ENCODE measurements at regions of chr1 and their contacts with region 1.

Region 1: DNA sequence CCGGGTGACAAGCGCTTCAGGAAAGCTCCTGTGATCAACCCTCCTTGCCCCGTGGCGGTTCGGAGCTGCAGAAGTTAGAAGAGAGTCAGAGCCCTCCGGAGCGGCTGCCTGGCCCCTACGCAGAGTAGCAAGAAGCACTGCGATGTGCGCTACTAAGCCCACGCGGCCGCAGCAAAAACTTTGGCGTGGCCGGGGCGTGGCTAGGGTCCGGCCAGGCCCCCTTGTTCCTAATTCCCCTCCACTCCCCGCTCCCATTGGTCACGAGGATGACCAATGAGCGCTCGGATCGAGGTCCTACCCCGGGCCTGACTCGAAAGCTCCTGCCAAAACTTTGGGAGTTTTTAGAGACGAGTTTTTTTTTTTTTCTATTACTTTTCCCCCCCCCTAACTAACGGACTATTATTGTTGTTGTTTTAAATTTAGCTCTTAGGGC is at the start of gene HLX:
- DNase-seq: peak; percentile 96
- ATAC-seq: peak; percentile 89
- H3K4me3 ChIP-seq: peak within 1 kb of the TSS; percentile 85
- H3K27ac ChIP-seq: peak within 1 kb of the TSS; percentile 20
- H3K4me1 ChIP-seq: peaks cover 16% of the 10 kb centered on the region; the same call in 1 of the 2 replicates
- H3K27me3 ChIP-seq: no peaks in the 10 kb centered on the region
- CTCF ChIP-seq: no peak
- total RNA-seq, gene HLX: 4.0 and 8.1 TPM in 2 replicates

Region 2: DNA sequence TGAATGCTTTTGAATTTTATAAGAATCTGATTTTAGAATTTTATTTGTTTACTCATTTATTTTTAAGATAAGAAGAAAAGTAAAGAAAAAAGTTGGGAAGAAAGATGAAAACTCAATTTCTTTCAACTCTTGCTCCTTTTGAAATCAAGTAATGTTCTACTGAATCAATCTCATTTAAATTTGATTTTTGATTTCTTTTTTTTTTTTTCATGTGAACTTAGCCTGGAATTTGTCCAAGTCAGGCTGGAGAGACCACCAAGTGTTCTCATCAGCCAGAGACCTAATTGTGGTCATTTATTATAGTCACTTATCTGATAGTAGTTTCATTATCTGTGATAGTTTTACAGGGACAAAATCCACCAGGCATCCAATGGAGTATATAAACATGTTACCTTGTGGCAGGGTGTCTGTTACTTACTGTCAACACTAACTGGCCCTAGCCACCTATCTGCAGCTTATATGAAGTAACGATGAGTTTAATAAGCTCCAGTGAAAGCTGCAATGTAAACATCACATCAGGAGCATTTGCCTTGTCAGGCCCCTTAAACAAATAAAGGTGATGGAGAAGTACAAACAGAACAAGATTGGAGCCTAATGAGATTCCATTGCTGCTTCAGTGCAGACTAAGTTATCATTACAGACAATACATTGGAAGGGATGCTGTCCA is 39.3 kb after region 1 on chr1:
- CTCF ChIA-PET with region 1: no interaction called
- POLR2A ChIA-PET with region 1: no interaction called
- intact Hi-C with region 1: loop called (anchors 2 kb)
- DNase-seq: peak; percentile 58
- ATAC-seq: peak; percentile 93
- H3K4me3 ChIP-seq: no peak overlapping the region
- H3K27ac ChIP-seq: no peak overlapping the region
- H3K4me1 ChIP-seq: peaks cover 11% of the 10 kb centered on the region
- H3K27me3 ChIP-seq: no peaks in the 10 kb centered on the region
- CTCF ChIP-seq: no peak

Region 3: GRCh38 chr1:220990427-220991339 is 111.6 kb after region 1 on chr1:
- CTCF ChIA-PET with region 1: interaction called, 5 read pairs
- POLR2A ChIA-PET with region 1: no interaction called
- intact Hi-C with region 1: loop called (anchors 2 kb)
- DNase-seq: peak; percentile 85
- ATAC-seq: peak; percentile 87
- H3K4me3 ChIP-seq: no peak overlapping the region
- H3K27ac ChIP-seq: peak overlapping the region; percentile 56
- H3K4me1 ChIP-seq: peaks cover 20% of the 10 kb centered on the region
- H3K27me3 ChIP-seq: no peaks in the 10 kb centered on the region
- CTCF ChIP-seq: peak; percentile 63

Region 4: GRCh38 chr1:221089266-221089665 is 210.2 kb after region 1 on chr1:
- CTCF ChIA-PET with region 1: no interaction called
- POLR2A ChIA-PET with region 1: no interaction called
- intact Hi-C with region 1: loop called (anchors 2 kb)
- DNase-seq: peak; percentile 89
- ATAC-seq: peak; percentile 86
- H3K4me3 ChIP-seq: peak overlapping the region; percentile 17; the same call in 1 of the 2 replicates
- H3K27ac ChIP-seq: peak overlapping the region; percentile 30
- H3K4me1 ChIP-seq: peaks cover 54% of the 10 kb centered on the region
- H3K27me3 ChIP-seq: no peaks in the 10 kb centered on the region
- CTCF ChIP-seq: no peak

Region 5: DNA sequence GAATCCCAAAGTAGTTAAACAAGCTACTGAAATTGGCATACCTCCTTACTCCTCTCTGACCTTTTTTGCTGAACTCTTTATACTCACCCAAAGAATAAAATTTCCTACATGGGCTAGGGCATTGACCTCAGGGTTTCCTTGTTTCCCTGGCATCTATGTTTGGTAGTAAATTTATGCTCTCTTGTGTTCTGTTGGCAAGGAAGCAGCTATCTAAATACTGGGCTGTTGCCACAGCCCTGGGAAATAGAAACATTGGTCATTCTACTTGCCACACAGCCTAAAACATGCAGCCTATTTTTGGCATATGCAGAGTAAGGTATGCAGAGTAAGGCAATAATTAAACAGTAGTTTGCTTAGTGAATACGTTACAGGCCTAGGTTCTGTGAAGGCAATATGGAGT is 351.5 kb after region 1 on chr1:
- CTCF ChIA-PET with region 1: no interaction called
- POLR2A ChIA-PET with region 1: no interaction called
- intact Hi-C with region 1: no loop called
- DNase-seq: peak; percentile 24
- ATAC-seq: peak; percentile 50
- H3K4me3 ChIP-seq: no peak overlapping the region
- H3K27ac ChIP-seq: no peak overlapping the region
- H3K4me1 ChIP-seq: peaks cover 7% of the 10 kb centered on the region; the same call in 1 of the 2 replicates
- H3K27me3 ChIP-seq: no peaks in the 10 kb centered on the region
- CTCF ChIP-seq: no peak

Measured in PC-3 (cell line).